Activated CD4-positive, alpha-beta T cell treated with anti-CD3 and anti-CD28 coated beads for 36 hours (primary cell): ENCODE measurements at regions of chr16 and their contacts with region 1.

Region 1: DNA sequence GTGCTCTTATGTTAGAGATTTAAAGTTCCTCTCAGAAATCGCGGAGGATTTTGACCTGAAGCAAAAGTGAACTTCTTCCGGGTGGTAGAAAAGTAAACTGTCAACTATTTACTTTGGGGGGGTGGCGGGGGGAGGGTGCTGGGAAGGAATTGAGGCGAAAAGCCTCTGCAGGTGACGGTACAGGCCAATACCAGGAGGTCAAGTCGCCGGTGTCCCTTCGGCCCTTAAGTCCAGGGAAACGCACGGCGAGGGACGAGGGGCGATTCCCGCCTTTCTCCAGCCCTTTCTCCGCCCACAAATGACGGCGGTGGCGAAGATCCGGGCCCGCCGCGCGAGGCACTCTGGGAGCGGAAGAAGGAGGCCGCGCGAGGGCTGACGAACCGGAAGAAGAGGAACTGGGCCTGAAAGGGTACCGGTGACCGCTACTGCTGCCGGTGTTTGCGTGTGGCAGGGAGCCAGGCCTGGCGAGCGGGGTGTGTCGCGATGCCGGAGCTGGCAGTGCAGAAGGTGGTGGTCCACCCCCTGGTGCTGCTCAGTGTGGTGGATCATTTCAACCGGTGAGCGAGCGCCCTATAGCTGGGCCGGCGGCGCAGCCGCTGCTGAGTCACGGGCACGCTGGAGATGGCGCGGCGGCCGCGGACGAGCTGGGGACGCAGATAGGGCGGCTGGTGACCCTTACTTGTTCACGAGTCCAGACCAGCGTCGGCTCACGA is at the start of gene PSMD7:
- DNase-seq: peak; percentile 95
- ATAC-seq: peak; percentile 91
- H3K4me3 Mint-ChIP-seq: peak within 1 kb of the TSS; percentile 98
- H3K27ac Mint-ChIP-seq: peak within 1 kb of the TSS; percentile 99
- H3K4me1 Mint-ChIP-seq: peaks cover 34% of the 10 kb centered on the region
- H3K27me3 Mint-ChIP-seq: no peaks in the 10 kb centered on the region
- total RNA-seq, gene PSMD7: 122 to 134 TPM

Region 2: DNA sequence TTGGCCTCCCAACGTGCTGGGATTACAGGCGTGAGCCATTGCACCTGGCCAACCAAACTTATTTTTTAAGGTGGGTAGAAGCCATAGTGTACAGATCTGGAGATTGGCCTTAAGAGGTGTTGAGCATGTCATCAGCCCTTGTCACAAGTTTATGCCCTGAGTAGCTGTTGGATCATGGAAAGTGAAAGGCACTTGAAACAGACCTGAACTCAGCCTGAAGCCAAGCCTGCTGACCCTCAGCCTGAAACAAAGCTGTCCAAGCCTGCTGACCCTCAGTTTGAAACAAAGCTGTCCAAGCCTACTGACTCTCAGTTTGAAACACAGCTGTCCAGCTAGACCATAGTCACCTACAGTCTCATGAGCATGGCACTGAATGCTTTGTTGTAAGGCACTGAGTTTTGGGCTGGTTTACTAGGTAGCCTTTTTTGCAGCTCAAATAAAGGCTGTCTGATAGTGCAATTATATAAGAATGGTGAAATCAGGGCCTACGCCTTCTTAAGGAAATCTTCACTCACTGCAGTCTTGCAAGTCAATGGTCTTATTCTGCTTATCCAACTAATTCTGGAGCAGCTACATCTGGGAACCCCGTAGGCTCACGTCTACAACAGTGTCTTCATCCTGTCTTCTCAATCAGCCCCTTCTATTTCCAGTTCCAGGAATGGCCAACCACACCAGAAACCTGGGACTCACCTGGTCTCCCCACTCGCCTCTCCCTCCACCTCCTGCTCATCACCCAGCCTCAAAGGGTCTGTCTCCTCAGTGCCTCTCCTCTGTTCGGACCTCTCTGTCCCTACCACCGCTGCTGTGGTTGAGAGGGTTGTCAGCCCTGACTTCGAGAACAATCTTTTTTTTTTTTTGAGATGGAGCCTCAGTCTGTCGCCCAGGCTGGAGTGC is 76.6 kb after region 1 on chr16:
- CTCF ChIA-PET with region 1: no interaction called
- POLR2A ChIA-PET with region 1: no interaction called
- intact Hi-C with region 1: loop called (anchors 1 kb)
- DNase-seq: no peak
- ATAC-seq: no peak
- H3K4me3 Mint-ChIP-seq: no peak overlapping the region
- H3K27ac Mint-ChIP-seq: no peak overlapping the region
- H3K4me1 Mint-ChIP-seq: no peaks in the 10 kb centered on the region
- H3K27me3 Mint-ChIP-seq: no peaks in the 10 kb centered on the region

Region 3: DNA sequence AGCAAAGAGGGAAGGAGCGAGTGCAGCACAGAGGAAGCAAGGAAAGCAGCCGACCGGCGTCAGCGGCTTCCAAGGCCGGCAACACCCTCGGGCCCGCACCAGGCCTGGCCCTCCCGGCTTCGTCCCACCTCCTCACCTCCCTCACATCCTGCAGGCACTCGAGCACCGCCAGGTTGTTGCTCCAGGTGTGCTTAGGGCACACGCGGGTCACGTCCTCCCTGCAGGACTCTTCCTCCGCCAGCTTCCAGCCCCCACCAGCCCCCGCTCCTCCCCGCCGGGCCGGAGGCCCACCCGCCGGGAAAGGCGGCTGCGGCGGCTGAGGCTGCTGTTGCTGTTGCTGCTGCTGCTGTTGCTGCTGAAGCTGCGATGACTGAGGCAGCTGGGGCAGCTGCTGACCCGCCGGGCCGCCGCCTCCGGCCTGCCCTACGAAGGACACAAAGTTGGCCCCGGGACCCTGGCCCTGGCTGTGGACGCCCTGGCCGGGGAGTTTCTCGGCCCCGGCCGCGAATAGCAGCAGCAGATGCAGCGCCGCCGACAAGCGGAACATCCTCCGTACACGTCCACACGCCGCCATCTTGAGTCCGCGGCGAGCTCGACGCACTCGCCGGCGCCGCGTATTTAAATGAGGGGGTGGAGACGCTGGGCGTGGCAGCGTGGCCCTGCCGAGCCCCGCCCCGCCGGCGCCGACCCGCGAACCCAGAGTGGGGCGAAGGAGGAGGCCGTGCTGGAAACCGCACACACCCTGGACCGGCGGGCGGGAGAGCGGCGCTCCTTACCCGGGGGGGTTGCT is 310.1 kb after region 1 on chr16 and contains the start of gene GLG1:
- CTCF ChIA-PET with region 1: no interaction called
- POLR2A ChIA-PET with region 1: no interaction called
- intact Hi-C with region 1: loop called (anchors 2 kb)
- DNase-seq: peak; percentile 95
- ATAC-seq: peak; percentile 87
- H3K4me3 Mint-ChIP-seq: peak within 1 kb of the TSS; percentile 87
- H3K27ac Mint-ChIP-seq: peak within 1 kb of the TSS; percentile 93
- H3K4me1 Mint-ChIP-seq: peaks cover 57% of the 10 kb centered on the region
- H3K27me3 Mint-ChIP-seq: no peaks in the 10 kb centered on the region
- total RNA-seq, gene GLG1: 66.3 to 68.3 TPM

Region 4: DNA sequence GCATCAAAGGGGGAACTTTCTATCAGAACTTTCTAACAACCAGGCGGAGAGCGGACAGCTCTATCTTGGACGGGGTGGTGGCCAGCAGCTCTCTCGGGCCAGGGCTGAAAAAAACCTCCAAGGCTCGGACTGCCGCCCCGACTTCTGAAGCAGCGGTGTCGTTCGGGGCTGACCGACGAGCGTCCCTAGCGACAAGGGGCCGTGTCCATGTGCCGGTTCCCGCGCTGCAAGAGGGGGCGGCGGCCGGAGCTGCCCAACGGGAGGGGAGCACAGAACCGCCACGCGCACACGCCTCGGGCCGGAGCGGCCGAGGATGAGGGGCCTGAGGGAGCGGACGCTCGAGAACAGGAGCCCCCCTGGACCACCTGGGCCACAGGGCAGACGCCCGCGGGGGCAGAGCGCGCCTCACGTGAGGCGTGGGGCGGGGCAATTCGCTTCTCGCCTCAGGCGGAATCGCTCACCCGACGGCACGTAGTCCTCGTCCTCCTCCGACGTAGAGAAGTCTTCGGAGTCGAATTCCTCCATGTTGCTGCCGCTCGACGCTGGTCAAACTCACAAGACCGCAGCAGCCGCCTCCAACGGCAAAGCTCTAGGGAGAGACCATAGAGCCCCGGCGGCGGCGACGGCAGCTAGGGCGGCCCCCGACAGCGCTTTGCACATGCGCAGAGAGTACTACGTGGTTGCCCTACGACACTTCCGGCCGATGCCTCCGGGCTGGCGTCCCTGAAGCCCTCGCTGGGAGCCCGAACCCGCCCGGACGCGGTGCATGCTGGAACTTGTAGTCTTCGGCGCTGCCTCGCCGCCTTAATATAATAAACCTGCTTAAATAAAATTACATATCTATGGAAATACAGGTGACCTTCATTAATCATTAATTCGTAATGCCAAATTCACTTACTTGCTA is 1136.5 kb after region 1 on chr16 and contains the start of gene CFDP1:
- CTCF ChIA-PET with region 1: no interaction called
- POLR2A ChIA-PET with region 1: no interaction called
- intact Hi-C with region 1: loop called in 1 of 2 experiments (anchors 1 kb)
- DNase-seq: peak; percentile 97
- ATAC-seq: peak; percentile 94
- H3K4me3 Mint-ChIP-seq: peak within 1 kb of the TSS; percentile 92
- H3K27ac Mint-ChIP-seq: peak within 1 kb of the TSS; percentile 95
- H3K4me1 Mint-ChIP-seq: peaks cover 39% of the 10 kb centered on the region
- H3K27me3 Mint-ChIP-seq: no peaks in the 10 kb centered on the region
- total RNA-seq, gene CFDP1: 44.0 to 48.2 TPM